GM18951 (cell line): ENCODE measurements at regions of chr16 and their contacts with region 1.

Region 1: GRCh38 chr16:20849587-20850390 is 43.5 kb downstream of the REXO5 start:
- POLR2A ChIP-seq: no peak

Region 2: DNA sequence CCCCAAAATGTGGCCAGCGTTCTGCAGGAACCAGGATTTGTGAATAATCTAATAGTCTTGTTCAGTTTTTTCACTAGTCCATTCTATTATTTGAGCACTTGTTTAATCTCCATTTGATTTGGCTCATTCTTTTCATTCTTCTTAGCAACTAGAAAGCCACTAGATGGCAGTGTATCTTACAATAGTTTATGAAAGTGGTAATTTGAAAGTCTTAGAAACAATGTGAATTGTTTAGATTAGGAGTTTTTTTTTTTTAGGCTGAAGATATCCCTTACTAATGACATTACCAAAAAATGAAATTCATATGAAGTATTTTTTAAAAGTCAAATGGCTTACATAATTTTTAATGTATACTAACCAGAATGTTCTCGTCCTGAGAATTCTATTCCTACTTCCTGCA is 50.2 kb before region 1 on chr16:
- in situ Hi-C with region 1: no loop called
- POLR2A ChIP-seq: no peak

Region 3: DNA sequence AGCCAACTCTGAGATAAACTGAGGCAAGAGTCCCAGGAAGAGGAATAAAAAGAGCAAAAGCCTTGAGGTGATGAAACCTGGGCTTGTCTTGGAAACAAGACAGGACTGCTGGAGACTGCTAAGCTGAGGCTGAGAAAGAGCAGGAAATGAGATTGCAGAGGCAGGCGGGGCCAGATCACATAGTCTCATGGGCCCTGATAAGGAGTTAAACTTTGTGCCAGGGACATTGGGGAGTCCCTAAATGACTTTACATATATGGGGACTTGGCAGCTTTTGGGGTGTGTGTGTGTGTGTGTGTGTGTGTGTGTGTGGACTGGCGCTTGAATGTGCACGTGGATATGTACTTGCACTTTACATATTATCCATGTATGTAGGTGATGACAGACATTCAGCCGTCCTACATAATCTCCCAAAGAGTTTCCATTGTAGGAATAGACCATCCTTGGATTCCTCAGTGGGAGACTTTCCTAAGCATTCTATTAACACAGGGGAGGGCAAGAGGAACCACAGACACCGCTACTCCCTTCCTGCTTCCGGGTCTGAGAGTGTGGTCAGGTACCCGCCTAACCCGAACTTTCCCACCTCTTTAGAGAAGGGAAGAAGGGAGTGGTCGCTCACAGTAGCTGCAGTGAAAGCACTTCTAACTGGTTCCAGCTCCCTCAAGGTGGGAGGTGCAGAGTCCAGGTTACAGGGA is 173.9 kb after region 1 on chr16:
- in situ Hi-C with region 1: no loop called
- POLR2A ChIP-seq: no peak

Region 4: DNA sequence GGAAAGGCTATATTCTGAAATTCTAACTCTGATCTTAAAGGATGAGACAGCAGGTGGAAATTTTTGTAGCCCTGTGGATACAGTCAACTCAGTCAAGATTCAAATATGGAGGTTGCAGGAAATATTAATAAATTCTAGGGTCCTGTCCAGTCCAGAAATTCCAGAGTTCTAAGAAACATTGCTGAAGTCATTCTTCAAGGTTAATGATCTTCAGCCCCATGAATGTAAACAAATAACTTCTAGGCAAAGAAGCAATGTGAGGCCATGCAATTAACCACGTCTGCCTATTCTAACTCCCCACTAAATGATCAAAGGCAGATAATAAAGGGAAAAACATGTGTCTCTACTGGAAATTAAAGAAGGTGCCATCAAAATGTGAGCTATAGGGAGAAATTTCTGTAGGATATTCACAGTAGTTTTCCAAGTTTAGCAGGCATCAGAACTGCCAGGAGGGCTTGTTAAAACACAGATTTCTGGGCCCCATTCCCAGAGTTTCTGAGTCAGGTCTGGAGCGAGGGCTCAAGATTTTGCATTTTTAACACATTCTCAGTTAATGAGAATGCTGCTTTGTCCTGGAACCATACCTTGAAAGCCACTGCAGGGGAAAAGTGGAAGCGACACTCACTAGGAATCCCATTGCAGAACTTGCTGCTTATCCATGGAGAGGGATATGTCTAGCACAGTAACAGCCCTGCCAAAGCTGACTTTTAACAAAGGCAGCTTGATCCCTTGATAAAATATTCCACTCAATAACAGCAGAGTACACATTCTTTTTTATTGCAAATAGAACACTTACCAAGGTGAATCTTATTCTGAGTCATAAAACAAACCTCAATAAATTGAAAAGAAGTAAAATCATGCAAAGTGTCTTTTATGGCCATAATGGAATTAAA is 239.1 kb after region 1 on chr16:
- in situ Hi-C with region 1: loop called (anchors 5 kb)
- POLR2A ChIP-seq: no peak

Region 5: GRCh38 chr16:21263640-21264570 is 414.1 kb after region 1 on chr16:
- in situ Hi-C with region 1: no loop called
- POLR2A ChIP-seq: peak; percentile 50